ENCODE measurements at regions of chr5 and their contacts with region 1.

Region 1: DNA sequence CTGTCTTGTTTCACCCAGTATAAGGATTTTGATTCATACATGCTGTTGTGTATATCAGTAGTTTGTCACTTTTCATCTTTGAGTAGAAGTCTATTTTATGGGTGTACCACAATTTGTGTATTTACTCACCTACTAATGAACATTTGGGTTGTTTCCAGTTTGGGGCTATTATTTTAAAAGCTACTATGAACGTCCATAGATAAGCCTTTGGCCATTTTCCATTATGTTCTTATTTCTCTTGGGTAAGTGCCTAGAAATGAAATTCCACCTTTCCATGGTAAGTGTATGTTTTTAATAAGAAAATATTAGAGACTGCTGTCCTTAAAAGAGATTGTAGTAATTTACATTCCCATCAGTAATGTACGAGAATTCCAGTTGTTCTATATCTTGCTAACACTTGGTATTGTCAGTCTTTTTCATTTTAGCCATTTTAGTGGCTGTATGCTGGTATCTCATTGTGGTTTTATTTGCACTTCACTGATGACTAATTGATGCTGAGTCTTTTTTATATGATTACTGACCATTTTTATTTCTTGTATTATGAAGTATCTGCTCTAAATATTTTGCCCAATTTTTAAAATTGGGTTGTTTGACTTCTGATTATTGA is 17.9 kb upstream of the PDE8B start:
- DNase-seq: no peak
- H3K4me3 ChIP-seq: no peak overlapping the region
- H3K27ac ChIP-seq: no peak overlapping the region
- H3K4me1 ChIP-seq: no peaks in the 10 kb centered on the region
- H3K27me3 ChIP-seq: no peaks in the 10 kb centered on the region
- CTCF ChIP-seq: no peak
- POLR2A ChIP-seq: no peak

Region 2: DNA sequence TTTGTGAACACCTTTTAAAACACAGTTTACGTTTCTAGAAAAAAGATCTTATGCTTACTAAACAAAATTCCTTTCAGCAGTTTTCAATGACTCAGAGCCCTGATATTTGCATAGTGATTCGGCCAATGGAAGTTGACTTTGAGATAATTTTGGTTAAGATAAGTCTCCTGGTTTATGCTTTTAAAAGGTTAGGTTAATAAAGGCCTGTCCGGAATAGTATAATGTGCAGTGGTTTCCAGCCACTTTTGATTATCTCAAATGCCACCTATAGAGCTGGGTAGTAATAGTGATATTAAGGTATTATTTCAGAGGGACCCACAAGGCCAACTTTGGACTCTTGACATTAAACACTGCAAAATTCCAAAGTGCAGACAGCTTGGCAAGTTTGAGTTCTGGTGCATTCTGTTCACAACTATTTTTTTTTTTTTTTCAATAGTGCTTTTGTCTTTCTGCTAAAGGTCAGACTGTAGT is 655.4 kb before region 1 on chr5:
- intact Hi-C with region 1: no loop called
- DNase-seq: no peak
- H3K4me3 ChIP-seq: no peak overlapping the region
- H3K27ac ChIP-seq: no peak overlapping the region
- H3K4me1 ChIP-seq: no peaks in the 10 kb centered on the region
- H3K27me3 ChIP-seq: no peaks in the 10 kb centered on the region
- CTCF ChIP-seq: no peak
- POLR2A ChIP-seq: no peak

Region 3: GRCh38 chr5:77101298-77101697 is 91.2 kb before region 1 on chr5:
- intact Hi-C with region 1: no loop called
- DNase-seq: no peak
- H3K4me3 ChIP-seq: no peak overlapping the region
- H3K27ac ChIP-seq: no peak overlapping the region
- H3K4me1 ChIP-seq: no peaks in the 10 kb centered on the region
- H3K27me3 ChIP-seq: no peaks in the 10 kb centered on the region
- CTCF ChIP-seq: no peak
- POLR2A ChIP-seq: no peak

Region 4: DNA sequence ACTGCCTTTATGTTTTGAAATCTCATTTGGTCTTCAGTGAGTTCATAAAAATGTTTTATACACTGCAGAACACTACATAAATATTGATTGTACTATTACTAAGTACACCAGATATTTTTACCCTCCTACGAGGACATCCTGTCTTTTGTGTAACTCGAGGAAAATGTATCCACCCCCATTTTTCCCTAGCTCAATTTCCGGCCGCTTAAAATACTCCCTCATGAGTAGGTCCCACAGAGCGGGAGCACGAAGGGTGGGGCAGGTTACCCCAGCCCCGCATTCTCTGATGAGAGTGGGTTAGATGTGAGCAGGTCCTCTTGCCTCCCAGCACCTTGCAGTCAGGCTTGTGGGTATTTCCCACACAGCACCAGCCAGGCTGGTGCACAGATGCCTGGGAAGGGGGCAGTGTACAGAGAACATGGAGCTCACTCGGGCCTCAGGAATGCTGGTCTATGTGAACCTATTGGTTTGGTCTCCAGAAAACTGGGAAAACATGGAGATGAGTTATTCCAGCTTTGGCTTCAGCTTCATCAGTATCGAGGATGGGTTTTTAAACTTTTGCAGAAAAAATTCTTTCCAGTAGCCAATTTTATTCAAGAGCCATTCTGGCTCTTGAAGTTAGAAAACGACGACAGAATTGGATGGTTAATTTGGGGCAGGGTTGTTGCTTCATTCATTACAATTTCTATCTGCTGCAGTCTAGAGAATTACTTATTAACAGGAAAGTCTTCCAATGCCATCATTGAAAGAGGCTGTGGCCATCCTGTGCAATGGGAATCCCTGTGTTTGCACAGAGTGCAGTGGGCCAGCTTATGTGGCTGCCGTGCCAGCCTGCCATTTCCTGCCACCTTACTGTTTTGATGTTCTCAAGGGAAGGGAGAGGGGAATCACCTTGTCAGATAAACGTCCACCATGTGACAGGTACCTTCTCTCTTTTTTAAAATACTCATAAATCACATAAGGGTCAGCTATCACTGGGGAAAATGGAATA is 226.3 kb after region 1 on chr5:
- intact Hi-C with region 1: no loop called
- DNase-seq: no peak
- H3K4me3 ChIP-seq: no peak overlapping the region
- H3K27ac ChIP-seq: no peak overlapping the region
- H3K4me1 ChIP-seq: no peaks in the 10 kb centered on the region
- H3K27me3 ChIP-seq: no peaks in the 10 kb centered on the region
- CTCF ChIP-seq: no peak
- POLR2A ChIP-seq: no peak

Region 5: GRCh38 chr5:79151942-79152671 is 1959.6 kb after region 1 on chr5:
- intact Hi-C with region 1: loop called (anchors 10 kb)
- DNase-seq: no peak
- H3K4me3 ChIP-seq: no peak overlapping the region
- H3K27ac ChIP-seq: no peak overlapping the region
- H3K4me1 ChIP-seq: no peaks in the 10 kb centered on the region
- H3K27me3 ChIP-seq: no peaks in the 10 kb centered on the region
- CTCF ChIP-seq: no peak
- POLR2A ChIP-seq: no peak